ENCODE measurements at regions of chr6 and their contacts with region 1.

Region 1: DNA sequence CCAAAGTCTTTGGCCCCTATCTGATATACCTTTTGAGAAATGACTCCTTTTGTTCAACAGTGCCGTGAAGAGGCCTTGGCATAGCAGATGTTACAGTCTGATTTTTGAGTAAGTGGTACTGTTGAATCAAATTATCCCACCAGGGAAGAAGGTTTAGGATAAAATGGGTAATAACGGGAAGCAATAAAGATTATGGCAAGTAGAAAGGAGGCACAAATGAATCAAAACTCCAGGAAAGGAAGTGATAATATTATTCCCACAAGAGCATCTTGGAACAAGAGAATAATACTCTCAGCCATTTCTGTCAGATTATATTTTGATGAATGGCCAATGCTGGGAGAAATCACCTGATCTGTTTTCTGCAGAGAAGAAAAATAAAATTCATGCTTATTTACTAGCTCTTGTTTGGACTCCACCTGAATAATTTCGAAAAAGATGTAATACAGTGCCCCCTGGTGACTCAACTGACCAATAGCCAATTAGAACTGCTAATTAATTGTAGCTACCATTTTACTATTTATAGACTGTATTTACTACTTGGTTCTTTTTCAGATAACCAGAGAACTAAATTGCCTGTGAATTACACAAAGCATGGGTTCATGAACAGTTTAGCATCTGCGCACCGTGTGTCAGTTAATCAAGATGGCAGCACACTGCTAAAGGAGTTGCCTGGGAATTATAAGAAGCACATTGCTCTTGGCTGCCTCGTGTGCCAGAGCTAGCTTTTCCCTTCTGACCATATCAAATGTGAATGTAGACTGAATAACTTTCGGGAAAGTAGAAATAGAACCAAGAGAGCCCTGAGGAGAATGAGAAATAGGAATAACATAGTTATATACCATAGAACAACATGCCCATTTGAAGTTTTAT is 78.5 kb upstream of the TRDN start:
- DNase-seq: no peak
- H3K4me3 Mint-ChIP-seq: no peak overlapping the region
- H3K27ac Mint-ChIP-seq: no peak overlapping the region
- H3K4me1 Mint-ChIP-seq: no peaks in the 10 kb centered on the region
- H3K27me3 Mint-ChIP-seq: no peaks in the 10 kb centered on the region

Region 2: GRCh38 chr6:123415844-123416468 is 299.3 kb before region 1 on chr6:
- intact Hi-C with region 1: loop called (anchors 1 kb)
- DNase-seq: no peak
- H3K4me3 Mint-ChIP-seq: no peak overlapping the region
- H3K27ac Mint-ChIP-seq: no peak overlapping the region
- H3K4me1 Mint-ChIP-seq: no peaks in the 10 kb centered on the region
- H3K27me3 Mint-ChIP-seq: no peaks in the 10 kb centered on the region

Region 3: DNA sequence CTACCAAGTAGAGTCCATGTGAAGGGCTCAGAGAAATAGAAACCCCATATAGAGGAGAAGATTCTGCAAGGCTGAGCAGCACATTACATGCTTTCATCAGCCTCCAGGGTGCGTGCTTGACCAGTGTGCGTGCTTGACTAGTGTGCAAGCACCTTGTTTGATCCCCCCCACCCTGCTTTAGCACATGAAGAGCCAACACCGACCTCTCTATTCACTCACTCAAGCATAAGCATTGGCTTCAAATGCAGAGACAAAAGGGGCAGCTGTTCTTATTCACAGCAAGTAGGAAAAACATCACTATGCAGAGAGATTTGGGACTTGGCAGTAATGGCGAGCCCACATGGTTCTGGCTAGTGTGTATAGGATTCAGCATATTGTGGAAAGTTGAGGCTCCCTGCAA is 968.3 kb after region 1 on chr6:
- intact Hi-C with region 1: no loop called
- DNase-seq: no peak
- H3K4me3 Mint-ChIP-seq: no peak overlapping the region
- H3K27ac Mint-ChIP-seq: no peak overlapping the region
- H3K4me1 Mint-ChIP-seq: no peaks in the 10 kb centered on the region
- H3K27me3 Mint-ChIP-seq: no peaks in the 10 kb centered on the region

Measured in activated T-helper 2 cell treated with anti-CD3 and anti-CD28 coated beads, Interferon-gamma antibody, Interleukin-2, Interleukin-4, amounts not matched to agents 10 μg/mL and 5 μg/mL and 100 μg/mL, durations not matched to agents 14 hours and 24 hours and 36 hours (primary cell).